ENCODE measurements at regions of chr10 and their contacts with region 1.

Region 1: DNA sequence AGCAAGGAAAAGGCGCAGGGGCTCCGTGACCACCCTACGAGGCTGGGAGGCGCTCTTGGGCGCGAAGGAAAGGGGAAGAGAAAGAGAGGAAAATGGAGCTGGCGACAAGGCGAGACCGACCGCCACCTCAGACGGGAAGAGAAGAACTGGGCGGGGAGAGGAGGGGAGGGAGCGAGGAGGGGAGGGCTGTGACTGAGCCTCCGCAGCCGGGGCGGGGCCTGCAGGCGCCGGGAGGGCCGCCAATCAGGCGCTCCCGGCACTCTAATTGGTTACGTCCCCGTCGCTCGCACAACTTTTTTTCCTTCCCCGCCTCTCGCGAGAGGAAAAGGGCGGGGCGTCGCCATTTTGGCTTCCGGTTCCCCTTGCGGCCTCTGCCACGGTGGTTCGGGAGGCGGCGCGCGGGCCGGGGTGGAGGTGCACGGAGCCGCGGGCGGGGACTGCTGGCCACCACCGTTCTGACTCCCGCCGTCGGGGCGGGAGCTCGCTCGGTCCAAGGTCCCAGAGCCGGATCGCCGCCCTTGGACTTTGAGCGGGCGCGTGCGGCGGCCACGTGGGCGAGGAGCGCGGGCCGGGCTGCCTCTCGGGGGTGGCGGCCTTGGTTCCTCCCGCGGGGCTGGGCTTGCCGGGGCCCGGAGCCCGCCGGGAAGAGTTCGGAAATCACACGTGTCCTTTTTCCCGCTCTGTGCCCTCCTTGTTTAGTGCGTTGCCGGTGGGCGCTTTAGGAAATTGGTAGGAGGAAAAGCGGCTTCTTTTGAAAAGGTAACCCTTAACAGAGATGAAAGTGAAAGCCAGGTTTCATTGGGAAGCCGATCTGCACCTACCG is at the start of gene GDI2:
- DNase-seq: peak; percentile 98
- H3K4me3 ChIP-seq: peak within 1 kb of the TSS; percentile 73 to 99 (median 76)
- H3K27ac ChIP-seq: peak within 1 kb of the TSS; percentile 84
- H3K4me1 ChIP-seq: peaks cover 7% of the 10 kb centered on the region
- H3K27me3 ChIP-seq: no peaks in the 10 kb centered on the region
- CTCF ChIP-seq: no peak
- total RNA-seq, gene GDI2: 202 to 306 TPM

Region 2: DNA sequence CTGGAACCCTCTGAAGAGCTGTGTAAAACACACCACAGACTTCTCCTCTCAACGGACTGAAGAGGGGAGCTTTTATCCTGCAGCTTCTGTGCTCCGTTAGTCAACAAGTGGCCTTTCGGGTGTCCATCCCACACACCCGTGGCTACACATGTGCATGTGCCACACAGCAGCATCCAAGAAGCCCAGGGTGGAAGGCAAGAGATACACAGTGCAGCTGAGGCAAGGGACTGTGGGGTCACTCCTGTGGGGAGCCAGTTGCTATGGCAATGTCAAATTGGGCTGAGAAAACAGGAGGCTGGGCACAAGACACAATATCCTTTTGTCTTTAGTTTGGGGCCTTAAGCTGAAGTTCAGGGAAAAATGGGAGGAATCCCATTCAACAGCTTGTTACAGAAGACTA is 372.4 kb before region 1 on chr10:
- CTCF ChIA-PET with region 1: no interaction called
- dilution Hi-C with region 1: no loop called
- in situ Hi-C with region 1: no loop called
- intact Hi-C with region 1: loop called (anchors 2 kb)
- DNase-seq: no peak
- H3K4me3 ChIP-seq: no peak overlapping the region
- H3K27ac ChIP-seq: no peak overlapping the region
- H3K4me1 ChIP-seq: peaks cover 3% of the 10 kb centered on the region
- H3K27me3 ChIP-seq: no peaks in the 10 kb centered on the region
- CTCF ChIP-seq: no peak

Region 3: DNA sequence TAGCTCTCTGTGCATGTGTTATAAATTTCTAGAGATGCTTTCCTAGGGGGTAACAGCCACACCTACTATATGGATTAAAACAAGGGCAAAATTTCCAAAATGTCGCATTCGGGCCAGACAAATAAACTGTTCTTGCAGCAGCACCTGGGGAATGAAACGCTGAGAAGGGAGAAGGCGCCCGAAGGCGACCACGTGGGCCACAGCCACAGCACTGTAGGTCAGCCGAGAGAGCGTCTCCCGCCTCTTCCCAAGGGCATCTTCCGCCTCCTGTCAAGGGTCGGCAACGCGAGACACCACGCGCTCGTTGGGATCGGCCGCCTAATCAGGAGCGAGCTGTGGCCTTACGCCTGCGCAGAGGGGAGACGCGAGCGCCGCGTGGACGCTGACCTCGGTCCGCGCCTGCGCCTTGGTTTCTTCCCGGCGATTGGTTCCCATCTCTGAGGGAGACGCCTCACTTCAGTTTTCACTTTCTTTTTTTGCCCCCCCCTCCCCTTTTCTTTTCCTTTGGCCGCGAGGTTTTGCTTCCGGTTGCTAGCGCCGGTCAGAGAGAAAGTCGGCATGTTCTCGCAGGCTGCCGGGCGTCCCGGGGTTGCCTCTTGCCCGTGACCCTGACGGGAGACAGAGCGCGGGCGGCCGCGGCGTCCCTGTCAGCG is 129.1 kb before region 1 on chr10 and contains the start of gene TASOR2:
- CTCF ChIA-PET with region 1: no interaction called
- dilution Hi-C with region 1: no loop called
- in situ Hi-C with region 1: no loop called
- intact Hi-C with region 1: loop called (anchors 5 kb)
- DNase-seq: peak; percentile 98
- H3K4me3 ChIP-seq: peak within 1 kb of the TSS; percentile 76 to 91 (median 81)
- H3K27ac ChIP-seq: peak within 1 kb of the TSS; percentile 64
- H3K4me1 ChIP-seq: peaks cover 5% of the 10 kb centered on the region
- H3K27me3 ChIP-seq: no peaks in the 10 kb centered on the region
- CTCF ChIP-seq: no peak
- total RNA-seq, gene TASOR2: 73.1 to 82.0 TPM

Region 4: DNA sequence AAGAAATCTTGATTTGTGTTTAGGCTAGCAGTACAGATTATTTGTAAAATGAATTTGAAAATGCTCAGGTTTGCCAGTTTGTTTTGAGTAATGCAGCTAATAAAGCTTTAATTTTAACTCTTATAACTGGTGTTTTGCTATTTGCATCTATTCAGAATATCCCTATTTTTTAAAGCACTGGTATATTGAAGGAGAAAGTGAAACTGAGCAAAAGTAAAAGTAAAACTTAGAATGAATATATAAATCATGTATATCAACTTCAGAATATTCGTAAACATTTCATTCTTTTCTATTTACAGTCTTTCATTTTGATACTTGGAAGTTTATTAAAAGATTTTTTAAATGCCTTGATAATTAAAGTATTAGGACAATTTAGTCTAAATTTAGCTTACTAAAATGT is 102.6 kb before region 1 on chr10:
- CTCF ChIA-PET with region 1: no interaction called
- dilution Hi-C with region 1: no loop called
- in situ Hi-C with region 1: no loop called
- intact Hi-C with region 1: no loop called
- DNase-seq: no peak
- H3K4me3 ChIP-seq: peak overlapping the region; percentile 17 to 62 (median 41)
- H3K27ac ChIP-seq: peak overlapping the region; percentile 47
- H3K4me1 ChIP-seq: no peaks in the 10 kb centered on the region
- H3K27me3 ChIP-seq: no peaks in the 10 kb centered on the region
- CTCF ChIP-seq: no peak

Region 5: GRCh38 chr10:5873515-5873995 is 60.1 kb after region 1 on chr10:
- CTCF ChIA-PET with region 1: interaction called, 8 read pairs
- dilution Hi-C with region 1: no loop called
- in situ Hi-C with region 1: no loop called
- intact Hi-C with region 1: loop called (anchors 1 kb)
- DNase-seq: peak; percentile 57
- H3K4me3 ChIP-seq: no peak overlapping the region
- H3K27ac ChIP-seq: no peak overlapping the region
- H3K4me1 ChIP-seq: no peaks in the 10 kb centered on the region
- H3K27me3 ChIP-seq: no peaks in the 10 kb centered on the region
- CTCF ChIP-seq: peak; percentile 62 to 65

Region 6: DNA sequence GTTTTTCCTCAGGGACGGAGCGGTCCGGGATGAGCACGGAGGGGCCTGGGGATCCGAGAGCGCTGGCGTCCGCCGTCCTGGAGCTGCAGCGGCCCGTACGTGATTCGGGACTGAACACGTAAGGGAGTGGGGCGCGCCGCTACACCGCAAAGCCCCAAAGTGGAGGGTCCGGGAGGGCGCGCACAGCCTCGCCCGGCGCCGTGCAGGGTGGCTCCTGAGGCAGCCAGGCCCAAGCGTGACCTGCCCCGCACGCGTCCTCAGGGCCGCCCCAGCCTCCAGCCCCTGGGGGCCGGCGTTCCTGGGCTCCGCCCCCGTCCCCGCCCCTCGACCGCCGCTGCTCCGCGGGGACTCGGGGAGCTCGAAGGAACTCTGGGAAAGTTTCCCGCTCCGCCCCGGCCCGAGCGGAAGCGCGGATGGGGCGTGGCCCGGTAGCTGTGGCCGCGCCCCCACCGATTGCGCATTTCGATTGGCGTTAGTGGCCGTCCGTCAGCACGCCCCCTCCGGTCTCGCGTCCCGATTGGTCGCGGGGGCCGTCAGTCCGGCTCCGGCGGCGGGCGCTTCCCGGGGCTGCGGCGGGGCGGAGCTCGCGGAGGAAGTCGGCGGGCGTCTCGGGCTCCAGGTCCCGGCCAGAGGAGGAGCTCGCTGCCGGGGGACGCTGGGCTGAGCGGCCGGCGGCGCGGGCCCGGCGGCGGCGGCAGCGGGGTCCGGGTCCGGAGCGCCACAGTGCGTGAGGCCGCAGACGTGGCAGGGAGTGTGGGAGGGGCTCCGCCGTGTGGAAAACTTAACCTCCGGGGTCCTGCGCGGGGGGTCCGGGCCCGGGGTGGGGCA is 76.3 kb after region 1 on chr10 and contains the starts of genes ANKRD16 and FBH1:
- CTCF ChIA-PET with region 1: no interaction called
- dilution Hi-C with region 1: no loop called
- in situ Hi-C with region 1: no loop called
- intact Hi-C with region 1: loop called (anchors 5 kb)
- DNase-seq: peak; percentile 99
- H3K4me3 ChIP-seq: peak within 1 kb of the TSS; percentile 84 to 98 (median 85)
- H3K27ac ChIP-seq: peak within 1 kb of the TSS; percentile 19
- H3K4me1 ChIP-seq: peaks cover 24% of the 10 kb centered on the region
- H3K27me3 ChIP-seq: no peaks in the 10 kb centered on the region
- CTCF ChIP-seq: no peak
- total RNA-seq, gene ANKRD16: 8.2 to 8.4 TPM
- total RNA-seq, gene FBH1: 62.7 to 77.3 TPM

Measured in mammary epithelial cell (primary cell).